ENCODE measurements at regions of chr18 and their contacts with region 1.

Region 1: DNA sequence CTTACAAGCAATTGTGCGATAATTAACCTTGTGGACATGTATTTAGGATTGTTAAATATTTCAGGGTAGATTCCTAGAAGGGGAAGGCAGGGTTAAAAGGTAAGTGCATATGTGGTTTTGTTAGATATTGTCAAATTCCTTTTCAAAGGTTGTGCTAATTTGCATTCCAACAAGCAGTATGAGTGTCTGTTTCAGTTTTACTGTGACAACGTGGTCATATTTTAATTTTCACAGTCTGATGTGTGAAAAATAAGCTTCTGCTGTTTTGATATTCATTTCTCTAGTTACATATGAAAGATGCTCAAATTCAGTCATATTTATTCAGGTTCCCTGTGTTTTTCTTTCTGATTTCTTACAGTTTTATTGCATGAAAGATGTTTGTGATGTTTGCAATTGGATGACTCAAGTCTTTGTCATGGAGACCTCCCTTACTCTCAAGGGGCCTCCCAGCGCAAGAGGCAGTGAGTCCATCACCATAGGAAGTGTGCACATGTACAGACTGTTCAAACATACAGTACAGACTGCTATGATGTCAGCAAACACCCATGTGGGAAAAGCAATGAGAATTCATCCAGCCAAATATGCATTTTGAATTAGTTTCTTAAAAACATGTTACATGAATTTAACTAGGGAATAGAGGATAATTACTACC is 310.8 kb downstream of the GALR1 start:
- DNase-seq: no peak
- H3K4me3 ChIP-seq: no peak overlapping the region
- H3K27ac ChIP-seq: no peak overlapping the region
- H3K4me1 ChIP-seq: no peaks in the 10 kb centered on the region
- H3K27me3 ChIP-seq: no peaks in the 10 kb centered on the region
- CTCF ChIP-seq: no peak
- EP300 ChIP-seq: no peak
- POLR2A ChIP-seq: no peak

Region 2: DNA sequence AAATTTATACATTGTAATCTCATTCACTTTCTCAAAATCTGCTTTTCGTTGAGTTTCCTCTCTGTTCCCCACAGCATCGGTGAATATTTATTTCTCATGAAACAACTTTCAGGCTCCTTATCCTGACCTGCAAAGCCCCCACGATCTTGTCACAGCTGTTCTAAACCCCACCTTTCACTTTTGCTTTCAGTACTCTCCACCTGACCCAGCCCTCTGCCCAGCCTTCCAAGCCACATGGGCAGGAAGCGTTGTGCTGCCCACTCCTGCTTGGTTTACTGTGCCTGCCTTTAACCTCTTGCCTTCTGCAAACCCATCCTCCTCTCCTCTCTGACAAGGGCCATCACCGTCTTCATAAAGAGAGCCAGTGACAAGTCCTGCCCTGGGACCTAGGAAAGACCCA is 48.3 kb before region 1 on chr18:
- intact Hi-C with region 1: loop called in 1 of 4 experiments (anchors 5 kb)
- DNase-seq: no peak
- H3K4me3 ChIP-seq: no peak overlapping the region
- H3K27ac ChIP-seq: no peak overlapping the region
- H3K4me1 ChIP-seq: no peaks in the 10 kb centered on the region
- H3K27me3 ChIP-seq: no peaks in the 10 kb centered on the region
- CTCF ChIP-seq: no peak
- EP300 ChIP-seq: no peak
- POLR2A ChIP-seq: no peak